ENCODE measurements at regions of chr10 and their contacts with region 1.

Region 1: DNA sequence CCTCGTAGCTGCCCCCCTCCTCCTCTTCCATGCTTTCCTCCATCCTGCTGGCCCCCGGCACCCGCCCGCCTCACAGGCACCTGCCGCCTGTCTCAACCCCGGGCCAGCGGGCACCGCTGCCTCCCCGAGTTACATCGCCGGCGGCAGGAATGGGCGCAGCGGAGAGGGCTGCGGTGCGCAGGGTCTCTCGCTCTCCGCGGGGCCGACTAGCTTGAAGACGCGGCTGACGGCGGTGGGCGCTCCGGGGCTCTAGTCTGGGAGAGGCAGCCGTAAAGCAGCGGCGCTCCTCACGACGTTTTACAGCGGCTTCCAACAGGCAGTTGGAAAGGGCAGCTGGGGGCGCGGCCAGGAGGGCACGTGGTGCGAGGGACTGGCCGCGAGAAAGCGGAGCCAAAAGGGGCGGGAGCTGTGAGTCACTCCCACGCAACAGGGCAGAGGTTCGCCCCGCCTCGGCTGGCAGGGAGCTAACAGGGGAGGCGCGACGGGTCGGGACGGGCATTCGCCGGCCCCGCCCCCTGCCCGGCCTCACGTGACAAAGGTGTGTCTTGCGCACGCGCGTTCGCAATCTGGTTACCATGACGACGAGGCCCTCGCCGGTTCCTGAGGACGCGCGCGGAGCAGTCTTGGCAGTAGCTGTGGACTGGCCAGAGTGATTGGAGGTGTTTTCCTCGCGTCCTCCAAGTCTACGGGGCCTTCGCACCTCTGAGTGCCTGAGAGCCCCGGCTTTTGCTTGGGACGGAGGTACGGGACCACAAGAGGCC is at the start of gene CACUL1:
- DNase-seq: peak; percentile 99
- H3K4me3 ChIP-seq: peak within 1 kb of the TSS; percentile 73 to 90 (median 90)
- H3K27ac ChIP-seq: peak within 1 kb of the TSS; percentile 79
- H3K4me1 ChIP-seq: no peaks in the 10 kb centered on the region
- H3K27me3 ChIP-seq: no peaks in the 10 kb centered on the region
- CTCF ChIP-seq: no peak
- total RNA-seq, gene CACUL1: 49.8 to 59.2 TPM

Region 2: DNA sequence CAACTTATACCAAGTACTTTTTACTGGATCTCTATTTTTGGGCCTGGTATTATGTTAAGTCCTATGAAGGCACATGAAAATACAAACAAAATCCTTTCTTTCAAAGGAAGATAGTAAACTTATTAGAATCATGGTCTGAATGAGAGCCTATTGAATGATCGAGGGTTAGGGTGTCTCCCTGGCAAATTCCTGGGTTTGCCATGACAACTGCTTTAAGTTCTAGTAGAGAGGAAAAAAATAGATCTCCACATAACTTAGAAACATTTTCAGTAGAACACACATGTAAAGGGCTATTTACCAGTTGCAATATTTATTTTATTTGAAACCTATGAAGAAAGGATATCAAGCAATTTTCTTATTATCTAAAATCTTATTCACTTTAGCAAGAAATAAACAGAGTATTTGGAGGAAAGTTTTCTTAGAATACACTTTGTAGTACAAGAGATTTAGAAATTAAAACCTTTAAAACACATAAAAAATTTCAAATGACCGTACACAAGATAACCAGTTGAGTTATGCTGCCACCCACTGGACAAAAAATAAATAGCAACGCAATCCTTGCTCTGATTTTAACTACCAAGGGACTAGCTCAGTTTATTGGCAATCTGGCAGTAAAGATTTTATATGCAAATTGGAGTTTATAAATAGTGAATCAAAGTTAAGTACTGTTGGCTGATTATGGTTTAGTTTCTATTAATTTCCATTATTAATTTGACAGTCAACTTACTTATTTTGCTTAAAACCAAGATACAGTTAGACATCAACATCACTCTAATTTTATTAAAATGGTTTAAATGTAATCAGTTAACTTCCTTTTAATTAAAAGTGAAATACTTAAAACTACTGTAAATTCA is 34.0 kb before region 1 on chr10:
- CTCF ChIA-PET with region 1: interaction called, 3 read pairs
- dilution Hi-C with region 1: no loop called
- in situ Hi-C with region 1: no loop called
- intact Hi-C with region 1: loop called (anchors 1 kb)
- DNase-seq: peak; percentile 31
- H3K4me3 ChIP-seq: no peak overlapping the region
- H3K27ac ChIP-seq: no peak overlapping the region
- H3K4me1 ChIP-seq: no peaks in the 10 kb centered on the region
- H3K27me3 ChIP-seq: no peaks in the 10 kb centered on the region
- CTCF ChIP-seq: peak; percentile 69 to 73

Region 3: DNA sequence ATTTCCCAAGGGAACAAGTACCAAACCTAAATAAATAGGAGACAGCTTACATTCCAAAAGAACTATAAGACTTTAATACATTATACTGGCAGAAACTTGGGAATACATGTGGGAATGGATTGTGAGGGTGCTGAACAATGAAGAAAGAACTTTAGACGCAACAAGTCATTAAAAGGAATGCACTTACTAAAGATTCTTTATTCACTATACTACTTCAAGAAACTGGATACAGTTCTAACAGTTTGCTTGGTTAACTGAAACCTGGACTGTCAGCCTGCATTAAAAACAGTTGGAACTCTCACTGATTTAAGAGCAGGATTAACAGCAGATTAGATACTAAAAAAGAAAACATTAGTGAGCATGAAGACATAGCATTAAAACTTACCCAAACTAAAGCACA is 12.1 kb before region 1 on chr10:
- CTCF ChIA-PET with region 1: no interaction called
- dilution Hi-C with region 1: no loop called
- in situ Hi-C with region 1: no loop called
- intact Hi-C with region 1: loop called (anchors 1 kb)
- DNase-seq: no peak
- H3K4me3 ChIP-seq: no peak overlapping the region
- H3K27ac ChIP-seq: peak overlapping the region; percentile 41
- H3K4me1 ChIP-seq: peaks cover 42% of the 10 kb centered on the region
- H3K27me3 ChIP-seq: no peaks in the 10 kb centered on the region
- CTCF ChIP-seq: no peak

Region 4: GRCh38 chr10:118792526-118792925 is 37.6 kb after region 1 on chr10:
- CTCF ChIA-PET with region 1: no interaction called
- dilution Hi-C with region 1: no loop called
- in situ Hi-C with region 1: no loop called
- intact Hi-C with region 1: loop called (anchors 2 kb)
- DNase-seq: peak; percentile 62
- H3K4me3 ChIP-seq: no peak overlapping the region
- H3K27ac ChIP-seq: no peak overlapping the region
- H3K4me1 ChIP-seq: peaks cover 21% of the 10 kb centered on the region
- H3K27me3 ChIP-seq: no peaks in the 10 kb centered on the region
- CTCF ChIP-seq: no peak

Region 5: GRCh38 chr10:118800920-118801319 is 46.0 kb after region 1 on chr10:
- CTCF ChIA-PET with region 1: interaction called, 4 read pairs
- dilution Hi-C with region 1: no loop called
- in situ Hi-C with region 1: no loop called
- intact Hi-C with region 1: loop called (anchors 2 kb)
- DNase-seq: peak; percentile 26
- H3K4me3 ChIP-seq: no peak overlapping the region
- H3K27ac ChIP-seq: no peak overlapping the region
- H3K4me1 ChIP-seq: peaks cover 20% of the 10 kb centered on the region
- H3K27me3 ChIP-seq: no peaks in the 10 kb centered on the region
- CTCF ChIP-seq: peak; percentile 51 to 68

Region 6: GRCh38 chr10:118892255-118892654 is 137.4 kb after region 1 on chr10:
- CTCF ChIA-PET with region 1: no interaction called
- dilution Hi-C with region 1: no loop called
- in situ Hi-C with region 1: no loop called
- intact Hi-C with region 1: no loop called
- DNase-seq: no peak
- H3K4me3 ChIP-seq: no peak overlapping the region
- H3K27ac ChIP-seq: no peak overlapping the region
- H3K4me1 ChIP-seq: no peaks in the 10 kb centered on the region
- H3K27me3 ChIP-seq: no peaks in the 10 kb centered on the region
- CTCF ChIP-seq: peak in 1 of 2 donors; percentile 15